WTC11 (cell line): ENCODE measurements at regions of chr1 and their contacts with region 1.

Region 1: GRCh38 chr1:156860113-156860627 is 495 bp upstream of the NTRK1 start:
- DNase-seq: peak; percentile 76
- ATAC-seq: peak; percentile 63
- H3K4me3 Mint-ChIP-seq: peak overlapping the region; percentile 89
- H3K27ac Mint-ChIP-seq: no peak overlapping the region
- H3K4me1 Mint-ChIP-seq: peaks cover 10% of the 10 kb centered on the region
- H3K27me3 Mint-ChIP-seq: peaks cover 92% of the 10 kb centered on the region
- CTCF ChIP-seq: peak; percentile 53

Region 2: DNA sequence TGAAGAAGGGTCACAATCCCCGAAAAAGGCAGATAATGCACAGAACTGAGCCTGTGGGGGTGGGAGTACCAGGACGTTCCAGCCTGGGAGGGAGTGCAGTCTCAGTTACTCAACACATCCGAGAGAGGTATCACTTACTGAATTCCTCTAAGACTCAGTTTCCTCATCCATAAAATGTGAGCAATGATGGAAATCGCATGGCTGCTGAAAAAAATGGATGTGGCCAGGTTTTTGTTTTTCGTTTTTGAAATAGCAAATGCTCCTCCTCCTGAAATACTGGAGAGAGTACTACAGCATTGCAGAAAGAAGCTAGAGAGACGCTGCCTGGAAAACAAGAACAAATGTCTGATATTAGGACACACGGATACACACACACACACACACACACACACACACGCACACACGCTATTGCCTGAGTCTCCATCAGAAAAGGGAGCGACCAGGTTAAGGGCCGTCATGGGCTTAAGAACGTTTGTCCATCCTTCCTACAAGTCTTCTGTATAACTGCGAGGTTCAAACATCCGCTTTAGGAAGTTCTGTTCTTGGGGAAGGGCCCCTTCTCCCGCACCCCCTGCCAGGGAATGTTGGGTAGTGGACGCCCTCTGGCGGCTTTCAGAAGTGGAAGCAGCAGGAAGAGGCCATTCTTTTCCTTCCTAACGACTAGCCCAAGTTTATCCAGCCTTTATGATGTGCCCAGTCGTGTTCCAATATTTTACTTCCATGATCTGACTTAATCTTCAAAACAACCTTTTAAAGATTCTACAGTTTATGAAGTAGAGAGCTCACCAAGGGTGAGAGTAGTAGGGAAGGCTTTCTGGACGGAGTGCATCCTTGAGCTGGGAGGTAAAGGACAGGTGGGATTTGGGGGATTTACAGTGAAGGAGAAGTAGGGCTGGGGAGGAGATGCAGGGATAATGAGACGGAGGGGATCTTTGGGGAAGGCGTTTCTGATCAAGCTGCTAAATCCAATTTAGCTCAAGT is 182.3 kb before region 1 on chr1:
- CTCF ChIA-PET with region 1: interaction called, 13 read pairs
- POLR2A ChIA-PET with region 1: no interaction called
- DNase-seq: peak; percentile 77
- ATAC-seq: peak; percentile 2
- H3K4me3 Mint-ChIP-seq: peak overlapping the region; percentile 76
- H3K27ac Mint-ChIP-seq: peak overlapping the region; percentile 82
- H3K4me1 Mint-ChIP-seq: peaks cover 57% of the 10 kb centered on the region
- H3K27me3 Mint-ChIP-seq: peaks cover 34% of the 10 kb centered on the region
- CTCF ChIP-seq: peak; percentile 76

Region 3: DNA sequence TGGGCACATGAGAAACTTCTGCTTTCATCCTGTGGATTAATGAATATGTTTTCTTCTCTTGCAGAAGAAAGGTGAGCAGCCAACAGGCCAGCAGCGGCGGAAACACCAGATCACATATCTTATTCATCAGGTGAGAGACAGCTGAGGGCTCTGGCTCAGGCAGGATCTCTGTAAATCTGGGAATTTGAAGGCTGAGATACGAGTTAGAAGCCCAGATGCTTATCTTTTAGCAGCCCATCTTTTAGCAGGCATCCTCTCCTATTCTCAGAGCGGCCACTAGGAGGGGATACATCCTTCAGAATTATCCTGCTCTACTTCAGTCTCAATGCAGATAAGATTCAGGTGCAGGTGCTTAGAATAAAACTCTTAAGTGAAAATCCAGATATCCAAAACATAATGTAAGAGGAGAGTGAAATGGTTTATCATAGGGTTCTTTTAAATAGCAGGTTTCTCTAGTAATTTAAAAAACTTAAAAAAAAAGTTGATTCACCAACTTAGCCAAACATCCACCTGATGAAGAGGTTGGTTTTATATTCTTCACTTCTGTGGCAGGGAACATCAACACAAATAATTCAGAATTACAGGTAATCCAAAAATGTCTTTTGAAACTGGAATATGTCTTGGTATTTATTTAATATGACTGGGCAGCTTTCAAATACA is 62.8 kb before region 1 on chr1:
- CTCF ChIA-PET with region 1: interaction called, 53 read pairs
- POLR2A ChIA-PET with region 1: no interaction called
- DNase-seq: peak; percentile 70
- ATAC-seq: peak; percentile 88
- H3K4me3 Mint-ChIP-seq: no peak overlapping the region
- H3K27ac Mint-ChIP-seq: no peak overlapping the region
- H3K4me1 Mint-ChIP-seq: no peaks in the 10 kb centered on the region
- H3K27me3 Mint-ChIP-seq: no peaks in the 10 kb centered on the region
- CTCF ChIP-seq: peak; percentile 69

Region 4: GRCh38 chr1:156838981-156839410 is 21.2 kb before region 1 on chr1:
- CTCF ChIA-PET with region 1: interaction called, 177 read pairs
- POLR2A ChIA-PET with region 1: no interaction called
- DNase-seq: peak; percentile 67
- ATAC-seq: peak; percentile 83
- H3K4me3 Mint-ChIP-seq: no peak overlapping the region
- H3K27ac Mint-ChIP-seq: no peak overlapping the region
- H3K4me1 Mint-ChIP-seq: peaks cover 5% of the 10 kb centered on the region
- H3K27me3 Mint-ChIP-seq: peaks cover 61% of the 10 kb centered on the region
- CTCF ChIP-seq: peak; percentile 87

Region 5: GRCh38 chr1:156892190-156893047 is 32.2 kb after region 1 on chr1:
- CTCF ChIA-PET with region 1: interaction called, 211 read pairs
- POLR2A ChIA-PET with region 1: no interaction called
- DNase-seq: peak; percentile 96
- ATAC-seq: peak; percentile 78
- H3K4me3 Mint-ChIP-seq: peak overlapping the region; percentile 72
- H3K27ac Mint-ChIP-seq: no peak overlapping the region
- H3K4me1 Mint-ChIP-seq: peaks cover 24% of the 10 kb centered on the region
- H3K27me3 Mint-ChIP-seq: peaks cover 76% of the 10 kb centered on the region
- CTCF ChIP-seq: peak; percentile 72

Region 6: DNA sequence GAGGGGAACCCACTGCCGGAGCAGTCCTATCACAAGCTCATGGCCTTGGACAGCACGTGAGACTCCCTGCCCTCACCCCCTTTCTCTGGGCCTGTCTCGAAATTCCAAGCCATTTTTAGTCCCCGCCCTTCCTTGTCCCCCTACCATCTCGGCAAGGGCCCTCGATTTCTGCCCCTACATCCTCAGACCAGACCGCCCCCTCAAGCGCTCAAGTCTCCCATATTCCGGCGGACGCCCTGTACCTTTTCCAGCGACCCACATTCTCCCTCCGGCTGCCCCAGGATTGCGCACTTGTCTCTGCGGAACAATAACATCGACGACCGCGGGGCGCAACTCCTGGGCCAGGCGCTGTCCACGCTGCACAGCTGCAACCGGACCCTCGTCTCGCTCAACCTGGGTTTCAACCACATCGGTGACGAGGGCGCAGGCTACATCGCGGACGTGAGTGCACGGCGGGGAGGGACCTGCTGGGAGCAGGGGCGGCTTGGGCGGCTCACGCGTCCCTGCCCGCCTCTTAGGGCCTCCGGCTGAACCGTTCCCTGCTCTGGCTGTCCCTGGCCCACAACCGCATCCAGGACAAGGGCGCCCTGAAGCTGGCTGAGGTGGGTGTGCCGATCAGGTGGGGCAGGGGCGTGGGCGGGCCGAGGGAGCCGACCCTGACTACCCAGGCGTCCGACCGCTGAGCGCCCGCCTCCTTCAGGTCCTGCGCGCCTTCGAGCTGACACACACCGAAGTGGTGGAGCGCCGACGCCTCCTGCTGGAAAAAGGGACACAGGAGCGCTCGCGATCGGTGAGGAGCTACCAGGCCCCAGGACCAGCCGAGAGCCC is 67.3 kb after region 1 on chr1:
- CTCF ChIA-PET with region 1: interaction called, 66 read pairs
- POLR2A ChIA-PET with region 1: no interaction called
- DNase-seq: peak; percentile 92
- ATAC-seq: peak; percentile 83
- H3K4me3 Mint-ChIP-seq: peak overlapping the region; percentile 68
- H3K27ac Mint-ChIP-seq: no peak overlapping the region
- H3K4me1 Mint-ChIP-seq: peaks cover 21% of the 10 kb centered on the region
- H3K27me3 Mint-ChIP-seq: peaks cover 91% of the 10 kb centered on the region
- CTCF ChIP-seq: peak; percentile 52; the same call in 1 of the 2 replicates

Region 7: GRCh38 chr1:156980551-156980950 is 120.4 kb after region 1 on chr1:
- CTCF ChIA-PET with region 1: no interaction called
- POLR2A ChIA-PET with region 1: no interaction called
- DNase-seq: no peak
- ATAC-seq: no peak
- H3K4me3 Mint-ChIP-seq: no peak overlapping the region
- H3K27ac Mint-ChIP-seq: no peak overlapping the region
- H3K4me1 Mint-ChIP-seq: peaks cover 11% of the 10 kb centered on the region
- H3K27me3 Mint-ChIP-seq: no peaks in the 10 kb centered on the region
- CTCF ChIP-seq: no peak